ENCODE measurements at regions of chr14 and their contacts with region 1.

Region 1: DNA sequence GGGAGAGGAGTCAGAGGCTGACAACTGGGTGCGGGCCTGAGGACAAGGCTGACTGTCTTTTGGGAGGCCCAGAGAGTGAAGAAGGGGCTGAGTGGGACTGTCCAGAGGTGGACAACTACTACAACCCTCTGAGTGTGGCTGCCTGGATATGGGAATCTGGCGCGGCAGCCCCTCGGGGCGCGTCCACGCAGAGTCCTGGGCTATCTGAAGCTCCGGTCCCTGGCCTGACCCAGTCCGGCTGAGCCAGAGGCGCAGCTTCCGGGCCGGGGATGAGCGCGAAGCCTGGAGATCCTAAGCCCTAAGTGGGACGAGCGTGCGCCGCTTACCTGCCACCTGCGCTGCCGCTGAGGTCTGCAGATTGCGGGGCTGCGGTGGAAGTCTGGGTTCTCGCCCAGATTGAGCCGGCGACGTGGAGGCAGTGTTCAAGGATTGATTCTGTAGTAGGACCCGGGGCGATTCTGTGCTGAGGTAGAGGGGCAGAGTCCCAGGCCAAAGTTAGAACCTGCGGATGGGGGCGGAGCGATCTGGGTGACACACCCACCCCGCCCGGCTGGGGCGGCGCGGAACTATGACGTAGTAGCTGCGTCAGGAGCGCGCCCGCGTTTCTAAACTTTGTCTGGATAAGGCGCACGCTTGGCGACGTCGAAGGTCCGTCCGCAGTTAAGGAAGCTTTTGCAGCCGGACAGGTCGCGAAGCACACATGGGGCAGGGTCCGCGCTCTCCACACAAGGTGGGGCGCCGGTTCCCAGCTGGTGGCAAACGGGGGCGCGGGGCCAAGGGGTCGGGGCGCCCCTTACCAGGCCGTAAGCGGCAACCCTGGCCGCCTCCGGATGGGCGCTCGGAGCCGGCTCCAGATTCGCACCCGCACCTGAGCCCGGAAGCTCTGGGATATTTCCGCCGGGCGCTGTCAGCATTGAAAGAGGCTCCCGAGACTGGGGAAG is at the starts of genes DHRS1 and NOP9:
- DNase-seq: peak; percentile 89 to 92 (median 90)
- H3K4me3 ChIP-seq: peak within 1 kb of the TSS; percentile 77 to 85
- H3K4me3 Mint-ChIP-seq: peak within 1 kb of the TSS; percentile 91 to 99 (median 94)
- H3K27ac ChIP-seq: peak within 1 kb of the TSS; percentile 87
- H3K27ac Mint-ChIP-seq: peak within 1 kb of the TSS; percentile 96 to 99 (median 98)
- H3K4me1 ChIP-seq: peaks cover 42% of the 10 kb centered on the region
- H3K4me1 Mint-ChIP-seq: peaks cover 32 to 66% (median 51%) of the 10 kb centered on the region in 4 donors
- H3K27me3 ChIP-seq: no peaks in the 10 kb centered on the region
- H3K27me3 Mint-ChIP-seq: no peaks in the 10 kb centered on the region
- total RNA-seq, gene DHRS1: 37.6 to 38.6 TPM
- total RNA-seq, gene NOP9: 23.1 to 28.1 TPM

Region 2: GRCh38 chr14:24013654-24014514 is 285.6 kb before region 1 on chr14:
- CTCF ChIA-PET with region 1: no interaction called
- POLR2A ChIA-PET with region 1: no interaction called
- intact Hi-C with region 1: loop called (anchors 2 kb)
- DNase-seq: peak; percentile 60 to 77 (median 70)
- H3K4me3 ChIP-seq: no peak overlapping the region
- H3K4me3 Mint-ChIP-seq: no peak overlapping the region
- H3K27ac ChIP-seq: no peak overlapping the region
- H3K27ac Mint-ChIP-seq: no peak overlapping the region
- H3K4me1 ChIP-seq: peaks cover 19% of the 10 kb centered on the region
- H3K4me1 Mint-ChIP-seq: peaks cover 19 to 27% (median 23%) of the 10 kb centered on the region in 4 donors
- H3K27me3 ChIP-seq: no peaks in the 10 kb centered on the region
- H3K27me3 Mint-ChIP-seq: peaks cover 0 to 3% of the 10 kb centered on the region in 2 donors

Region 3: DNA sequence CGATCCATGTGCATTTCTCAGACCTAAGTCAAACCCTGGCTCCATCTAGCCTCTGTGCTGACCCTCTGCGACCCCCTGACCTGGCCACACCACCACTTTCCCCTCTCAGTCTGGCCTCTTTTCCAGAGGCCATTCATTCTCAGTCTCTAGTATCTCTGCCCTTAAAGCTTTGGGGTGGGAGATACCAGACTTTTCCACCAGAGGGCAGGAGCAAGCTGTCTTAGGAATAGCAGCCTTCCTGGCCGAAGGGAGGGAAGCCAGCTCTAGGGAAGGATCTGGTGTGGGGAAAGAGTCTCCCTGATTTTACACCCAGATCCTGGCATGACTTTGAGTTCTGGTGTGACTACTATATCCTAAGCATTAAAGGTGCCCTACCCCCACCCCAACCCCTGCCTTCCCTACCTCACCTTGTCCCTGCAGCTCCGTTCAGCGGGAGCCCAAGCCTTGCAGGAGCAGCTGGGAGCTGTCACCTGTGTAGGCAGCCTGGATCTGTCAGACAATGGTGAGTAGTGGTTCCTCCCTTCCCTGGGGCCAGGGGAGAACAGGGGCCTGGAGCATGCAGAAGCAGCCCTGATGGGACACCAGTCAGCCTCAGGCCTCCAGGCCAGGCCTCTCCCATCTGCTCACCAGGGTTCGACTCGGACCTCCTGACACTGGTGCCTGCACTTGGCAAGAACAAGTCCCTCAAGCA is 241.1 kb before region 1 on chr14:
- CTCF ChIA-PET with region 1: interaction called, 7 read pairs
- POLR2A ChIA-PET with region 1: no interaction called
- intact Hi-C with region 1: loop called (anchors 1 kb)
- DNase-seq: peak; percentile 49 to 63 (median 61)
- H3K4me3 ChIP-seq: no peak overlapping the region
- H3K4me3 Mint-ChIP-seq: peak overlapping the region in 1 of 8 donors; percentile 59
- H3K27ac ChIP-seq: no peak overlapping the region
- H3K27ac Mint-ChIP-seq: peak overlapping the region in 6 of 7 donors; percentile 10 to 81 (median 36)
- H3K4me1 ChIP-seq: no peaks in the 10 kb centered on the region
- H3K4me1 Mint-ChIP-seq: peaks cover 2 to 8% (median 3%) of the 10 kb centered on the region in 4 donors
- H3K27me3 ChIP-seq: no peaks in the 10 kb centered on the region
- H3K27me3 Mint-ChIP-seq: peaks cover 2% of the 10 kb centered on the region in 2 donors

Region 4: GRCh38 chr14:24271134-24271833 is 28.2 kb before region 1 on chr14 and contains the start of gene RABGGTA:
- CTCF ChIA-PET with region 1: interaction called, 29 read pairs
- POLR2A ChIA-PET with region 1: interaction called, 27 read pairs
- intact Hi-C with region 1: loop called (anchors 1 kb)
- DNase-seq: peak; percentile 95 to 98 (median 97)
- H3K4me3 ChIP-seq: peak within 1 kb of the TSS; percentile 86 to 91
- H3K4me3 Mint-ChIP-seq: peak within 1 kb of the TSS; percentile 90 to 95 (median 91)
- H3K27ac ChIP-seq: peak within 1 kb of the TSS; percentile 94
- H3K27ac Mint-ChIP-seq: peak within 1 kb of the TSS; percentile 91 to 100 (median 99)
- H3K4me1 ChIP-seq: peaks cover 33% of the 10 kb centered on the region
- H3K4me1 Mint-ChIP-seq: peaks cover 24 to 46% (median 39%) of the 10 kb centered on the region in 4 donors
- H3K27me3 ChIP-seq: no peaks in the 10 kb centered on the region
- H3K27me3 Mint-ChIP-seq: no peaks in the 10 kb centered on the region
- total RNA-seq, gene RABGGTA: 55.6 to 62.5 TPM

Region 5: DNA sequence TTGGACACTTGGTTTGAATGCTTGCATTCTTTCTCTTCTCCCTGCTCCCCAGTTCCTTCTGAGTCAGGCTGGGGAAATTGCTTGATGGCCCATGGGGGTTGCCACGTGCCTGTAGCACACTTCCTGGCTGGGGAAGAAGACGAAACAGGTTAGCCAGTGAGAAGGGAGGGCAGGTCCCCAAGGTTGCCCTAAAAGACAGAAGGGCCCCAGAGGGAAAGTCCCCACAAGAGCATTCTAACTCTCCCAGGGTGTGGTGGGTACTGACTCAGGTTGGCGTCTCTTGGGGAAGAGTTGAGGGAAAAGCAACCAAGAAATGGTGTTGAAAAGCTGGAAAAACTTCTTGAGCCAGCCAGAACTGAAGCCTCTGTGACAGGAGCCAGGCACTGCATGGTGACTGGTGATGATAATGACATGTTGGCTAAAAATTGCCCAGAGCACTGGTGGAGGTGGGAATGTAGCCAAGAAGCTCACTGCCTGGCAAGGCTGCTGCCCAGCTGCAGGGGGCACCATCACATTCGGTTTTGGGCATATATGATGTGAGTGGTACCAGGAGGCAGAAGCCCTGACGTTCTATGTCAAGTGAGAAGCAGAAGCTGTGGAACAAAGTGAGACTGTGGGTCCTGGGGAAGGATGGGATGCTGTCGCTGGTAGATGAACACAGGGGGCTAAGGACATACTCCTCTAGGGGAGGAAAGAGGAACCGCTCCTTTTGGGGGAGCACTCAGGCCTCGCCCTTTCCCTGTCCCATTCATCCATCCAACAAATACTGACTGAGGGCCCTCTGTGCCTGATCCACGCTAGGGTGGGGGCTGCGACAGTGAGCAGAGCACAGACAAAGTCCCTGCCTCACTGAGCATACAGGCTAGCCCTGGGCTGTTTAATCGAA is 20.0 kb before region 1 on chr14:
- CTCF ChIA-PET with region 1: interaction called, 19 read pairs
- POLR2A ChIA-PET with region 1: interaction called, 9 read pairs
- intact Hi-C with region 1: no loop called
- DNase-seq: peak; percentile 46 to 85 (median 51)
- H3K4me3 ChIP-seq: no peak overlapping the region
- H3K4me3 Mint-ChIP-seq: peak overlapping the region in 4 of 8 donors; percentile 43 to 67 (median 46)
- H3K27ac ChIP-seq: peak overlapping the region; percentile 37
- H3K27ac Mint-ChIP-seq: peak overlapping the region; percentile 75 to 95 (median 91)
- H3K4me1 ChIP-seq: peaks cover 23% of the 10 kb centered on the region
- H3K4me1 Mint-ChIP-seq: peaks cover 21 to 44% (median 30%) of the 10 kb centered on the region in 4 donors
- H3K27me3 ChIP-seq: no peaks in the 10 kb centered on the region
- H3K27me3 Mint-ChIP-seq: no peaks in the 10 kb centered on the region